Pancreas (tissue), 10 donors: ENCODE measurements at regions of chr18 and their contacts with region 1.

Region 1: DNA sequence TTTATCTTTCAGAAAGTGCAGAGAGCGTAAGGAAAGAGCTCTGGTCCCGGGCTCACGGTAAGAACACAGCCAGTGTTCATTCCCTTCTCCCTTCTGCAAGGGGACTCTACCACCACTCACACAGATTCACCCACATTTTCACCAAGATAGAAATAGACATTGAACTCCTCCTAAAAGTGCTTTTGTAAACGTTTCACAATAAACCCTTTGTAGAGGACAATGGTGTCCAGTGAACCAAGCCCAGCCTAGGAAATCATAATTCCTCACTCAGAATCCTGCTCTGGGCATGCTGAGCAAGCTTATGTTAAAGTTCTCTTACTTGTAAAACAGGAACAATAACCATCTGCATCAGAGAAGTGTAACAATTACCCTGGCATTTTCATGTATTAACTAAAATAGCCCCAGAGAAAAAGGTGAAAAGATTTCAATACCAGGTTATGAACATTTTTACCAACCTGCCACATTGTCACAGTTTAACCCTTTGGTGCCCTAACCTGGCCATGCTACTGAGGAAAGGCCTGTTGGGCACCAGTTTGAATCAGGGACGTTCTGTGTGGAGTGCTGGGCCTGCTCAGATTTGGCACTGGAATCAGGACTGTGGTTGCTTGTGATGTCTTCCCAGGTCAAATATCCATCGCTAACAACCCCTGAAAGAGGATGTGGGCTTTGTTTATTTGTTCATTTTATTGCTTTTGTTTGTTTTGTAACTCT is 22.5 kb upstream of the NDUFV2 start:
- DNase-seq: no peak
- ATAC-seq: peak in 2 of 4 donors; percentile 33 to 34
- H3K4me3 ChIP-seq: no peak overlapping the region
- H3K27ac ChIP-seq: no peak overlapping the region
- H3K4me1 ChIP-seq: no peaks in the 10 kb centered on the region
- H3K27me3 ChIP-seq: no peaks in the 10 kb centered on the region
- CTCF ChIP-seq: no peak

Region 2: GRCh38 chr18:9147440-9148202 is 67.6 kb after region 1 on chr18:
- intact Hi-C with region 1: loop called in 1 of 3 experiments (anchors 5 kb)
- DNase-seq: peak in 3 of 6 donors; percentile 27 to 44 (median 32)
- ATAC-seq: peak; percentile 82 to 95 (median 92)
- H3K4me3 ChIP-seq: no peak overlapping the region
- H3K27ac ChIP-seq: peak overlapping the region in 2 of 4 donors; percentile 39 to 61
- H3K4me1 ChIP-seq: peaks cover 19 to 45% (median 35%) of the 10 kb centered on the region in 3 donors
- H3K27me3 ChIP-seq: no peaks in the 10 kb centered on the region
- CTCF ChIP-seq: peak in 3 of 4 donors; percentile 18 to 54 (median 49)

Region 3: GRCh38 chr18:9334329-9334972 is 254.5 kb after region 1 on chr18 and contains the start of gene TWSG1:
- intact Hi-C with region 1: loop called in 1 of 3 experiments (anchors 10 kb)
- DNase-seq: peak; percentile 92 to 98 (median 94)
- ATAC-seq: peak; percentile 91 to 96 (median 92)
- H3K4me3 ChIP-seq: peak within 1 kb of the TSS; percentile 76 to 94 (median 86)
- H3K27ac ChIP-seq: peak within 1 kb of the TSS; percentile 56 to 80 (median 72)
- H3K4me1 ChIP-seq: peaks cover 0 to 9% (median 5%) of the 10 kb centered on the region in 3 donors
- H3K27me3 ChIP-seq: no peaks in the 10 kb centered on the region
- CTCF ChIP-seq: peak in 2 of 4 donors; percentile 10 to 23
- total RNA-seq, gene TWSG1: 4.1 to 13.7 (median 6.1) TPM